Panc1 (cell line): ENCODE measurements at regions of chr13 and their contacts with region 1.

Region 1: DNA sequence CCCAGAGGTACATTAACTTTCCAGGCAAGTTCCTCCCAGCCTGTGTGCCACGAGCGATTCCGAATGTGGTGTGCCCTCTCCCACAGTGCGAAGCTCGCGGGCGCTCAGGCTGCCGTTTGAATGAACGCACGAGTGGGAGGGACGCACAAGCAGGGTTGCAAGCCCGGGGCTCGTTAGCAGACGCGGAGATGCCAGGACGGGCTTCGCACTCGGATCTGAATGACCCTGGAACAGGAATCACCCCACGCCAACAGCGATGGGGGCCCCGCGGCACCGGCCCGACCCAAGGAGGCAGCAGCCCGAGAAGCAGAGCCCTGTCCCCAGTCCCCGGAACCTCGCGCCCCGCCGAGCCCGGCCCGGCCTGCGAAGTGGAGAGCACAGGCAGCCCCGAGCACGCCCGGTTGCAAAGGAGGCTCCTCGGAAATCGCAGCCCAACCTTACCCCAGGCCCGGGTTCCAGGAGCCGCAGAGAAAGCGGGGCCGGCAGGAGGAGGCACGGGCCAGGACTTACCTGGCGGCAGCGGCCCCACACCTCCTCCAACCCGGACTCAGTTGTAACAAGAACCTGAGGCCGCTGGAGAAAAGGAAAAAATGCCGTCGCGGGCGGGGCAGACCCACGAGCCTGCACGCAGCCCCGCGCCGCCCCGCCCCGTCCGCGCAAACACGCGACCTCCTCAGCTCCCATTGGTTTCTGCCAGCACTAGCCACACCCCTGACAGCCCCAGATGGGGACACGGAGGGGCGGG is at the start of gene SLC25A30:
- DNase-seq: no peak
- ATAC-seq: peak; percentile 98
- H3K4me3 ChIP-seq: peak within 1 kb of the TSS; percentile 69 to 87
- H3K27ac ChIP-seq: peak within 1 kb of the TSS; percentile 88
- H3K4me1 ChIP-seq: no peaks in the 10 kb centered on the region
- H3K27me3 ChIP-seq: no peaks in the 10 kb centered on the region
- CTCF ChIP-seq: no peak
- total RNA-seq, gene SLC25A30: 26.8 TPM

Region 2: GRCh38 chr13:45257638-45258338 is 160.2 kb before region 1 on chr13:
- CTCF ChIA-PET with region 1: no interaction called
- POLR2A ChIA-PET with region 1: no interaction called
- in situ Hi-C with region 1: no loop called
- intact Hi-C with region 1: no loop called
- DNase-seq: no peak
- ATAC-seq: no peak
- H3K4me3 ChIP-seq: no peak overlapping the region
- H3K27ac ChIP-seq: no peak overlapping the region
- H3K4me1 ChIP-seq: no peaks in the 10 kb centered on the region
- H3K27me3 ChIP-seq: no peaks in the 10 kb centered on the region
- CTCF ChIP-seq: no peak

Region 3: GRCh38 chr13:45340422-45340925 is 77.5 kb before region 1 on chr13:
- CTCF ChIA-PET with region 1: no interaction called
- POLR2A ChIA-PET with region 1: interaction called, 13 read pairs
- in situ Hi-C with region 1: no loop called
- intact Hi-C with region 1: no loop called
- DNase-seq: no peak
- ATAC-seq: peak; percentile 49
- H3K4me3 ChIP-seq: peak overlapping the region; percentile 71 to 82
- H3K27ac ChIP-seq: peak overlapping the region; percentile 85
- H3K4me1 ChIP-seq: peaks cover 23% of the 10 kb centered on the region
- H3K27me3 ChIP-seq: no peaks in the 10 kb centered on the region
- CTCF ChIP-seq: no peak; the same call in 1 of the 2 replicates

Region 4: GRCh38 chr13:45393941-45394570 is 23.9 kb before region 1 on chr13:
- CTCF ChIA-PET with region 1: no interaction called
- POLR2A ChIA-PET with region 1: interaction called, 11 read pairs
- in situ Hi-C with region 1: no loop called
- intact Hi-C with region 1: no loop called
- DNase-seq: no peak
- ATAC-seq: peak; percentile 83
- H3K4me3 ChIP-seq: no peak overlapping the region
- H3K27ac ChIP-seq: no peak overlapping the region
- H3K4me1 ChIP-seq: no peaks in the 10 kb centered on the region
- H3K27me3 ChIP-seq: no peaks in the 10 kb centered on the region
- CTCF ChIP-seq: peak; percentile 82

Region 5: DNA sequence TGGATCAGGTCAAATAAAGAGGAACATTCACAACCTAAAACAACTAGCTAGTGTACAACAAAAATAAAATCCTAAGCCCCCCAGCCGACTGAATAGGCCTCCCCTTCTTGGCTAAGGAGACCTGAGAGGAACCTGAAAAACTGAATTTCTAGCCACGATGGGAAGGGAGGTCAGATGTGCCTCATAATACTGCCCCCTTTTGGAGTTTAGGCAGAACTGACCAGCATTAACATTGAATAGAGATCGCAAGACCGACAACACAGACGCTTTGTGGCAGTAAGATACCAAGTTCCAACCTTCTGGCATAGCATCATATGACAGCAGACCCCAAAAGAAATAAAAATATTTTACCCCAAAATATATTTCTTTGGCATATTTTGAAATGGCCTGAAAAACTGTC is 300.1 kb after region 1 on chr13:
- CTCF ChIA-PET with region 1: no interaction called
- POLR2A ChIA-PET with region 1: no interaction called
- in situ Hi-C with region 1: no loop called
- intact Hi-C with region 1: no loop called
- DNase-seq: no peak
- ATAC-seq: no peak
- H3K4me3 ChIP-seq: no peak overlapping the region
- H3K27ac ChIP-seq: no peak overlapping the region
- H3K4me1 ChIP-seq: no peaks in the 10 kb centered on the region
- H3K27me3 ChIP-seq: no peaks in the 10 kb centered on the region; the same call in 1 of the 2 replicates
- CTCF ChIP-seq: peak; percentile 57